MCF 10A (cell line): ENCODE measurements at regions of chr19 and their contacts with region 1.

Region 1: DNA sequence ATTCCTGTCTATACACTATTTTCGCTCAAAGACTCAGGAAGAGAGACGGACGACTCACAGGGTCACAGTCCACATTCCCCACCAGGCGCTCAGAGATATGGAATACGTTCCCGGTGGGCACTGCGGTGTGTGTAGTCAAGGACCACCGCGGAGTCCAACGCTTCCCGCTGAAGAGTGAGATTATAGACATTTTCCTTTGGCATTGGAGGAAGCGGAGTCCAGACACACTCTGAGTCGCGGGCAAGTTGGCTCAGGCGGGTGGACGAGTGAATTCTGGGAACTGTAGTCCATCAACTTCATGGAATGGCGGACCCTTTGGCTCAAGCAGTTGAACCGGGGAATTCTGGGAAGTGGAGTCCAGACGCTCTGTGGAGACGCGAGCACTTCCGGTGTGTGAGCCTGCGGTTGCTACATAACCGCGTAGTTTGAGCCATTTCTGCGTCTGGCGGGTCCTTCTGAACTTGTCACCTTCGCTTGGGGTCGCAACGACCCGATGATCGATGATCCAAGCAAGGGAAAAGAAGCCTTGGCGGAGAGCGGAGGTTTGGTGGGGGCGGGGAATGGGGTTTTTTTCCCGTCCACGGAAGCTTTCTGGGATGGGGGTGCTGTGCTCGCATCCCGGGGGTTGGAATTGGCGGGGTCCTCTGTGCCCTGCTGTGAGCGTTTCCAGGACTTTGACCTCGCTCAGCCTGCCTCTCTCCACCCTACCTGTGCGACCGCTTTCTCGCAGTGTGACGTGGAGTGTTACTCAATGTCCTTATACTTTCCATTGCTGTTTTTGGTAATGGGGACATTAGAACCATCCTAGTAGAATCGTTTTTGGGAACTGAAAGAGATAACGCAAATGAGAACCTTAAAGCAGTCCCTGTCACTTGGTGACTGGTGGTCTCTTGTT is at the start of gene ZNF230:
- DNase-seq: peak; percentile 99
- H3K4me3 Mint-ChIP-seq: peak within 1 kb of the TSS; percentile 84
- H3K27ac Mint-ChIP-seq: peak within 1 kb of the TSS; percentile 90
- H3K4me1 Mint-ChIP-seq: peaks cover 14% of the 10 kb centered on the region
- H3K27me3 Mint-ChIP-seq: no peaks in the 10 kb centered on the region
- CTCF ChIP-seq: no peak
- total RNA-seq, gene ZNF230: 2.9 and 4.0 TPM in 2 replicates

Region 2: GRCh38 chr19:43950834-43951645 is 51.8 kb before region 1 on chr19 and contains the start of gene ZNF221:
- CTCF ChIA-PET with region 1: no interaction called
- POLR2A ChIA-PET with region 1: interaction called, 5 read pairs
- intact Hi-C with region 1: loop called (anchors 1 kb)
- DNase-seq: peak; percentile 97
- H3K4me3 Mint-ChIP-seq: peak within 1 kb of the TSS; percentile 96
- H3K27ac Mint-ChIP-seq: peak within 1 kb of the TSS; percentile 91
- H3K4me1 Mint-ChIP-seq: no peaks in the 10 kb centered on the region
- H3K27me3 Mint-ChIP-seq: peaks cover 11% of the 10 kb centered on the region
- CTCF ChIP-seq: no peak
- total RNA-seq, gene ZNF221: 1.2 and 1.8 TPM in 2 replicates

Region 3: GRCh38 chr19:43983912-43984686 is 18.7 kb before region 1 on chr19 and contains the start of gene ZNF155:
- CTCF ChIA-PET with region 1: interaction called, 3 read pairs
- POLR2A ChIA-PET with region 1: interaction called, 20 read pairs
- intact Hi-C with region 1: no loop called
- DNase-seq: peak; percentile 96
- H3K4me3 Mint-ChIP-seq: peak within 1 kb of the TSS; percentile 96
- H3K27ac Mint-ChIP-seq: peak within 1 kb of the TSS; percentile 82
- H3K4me1 Mint-ChIP-seq: no peaks in the 10 kb centered on the region
- H3K27me3 Mint-ChIP-seq: no peaks in the 10 kb centered on the region
- CTCF ChIP-seq: no peak
- total RNA-seq, gene ZNF155: 4.2 and 6.7 TPM in 2 replicates

Region 4: DNA sequence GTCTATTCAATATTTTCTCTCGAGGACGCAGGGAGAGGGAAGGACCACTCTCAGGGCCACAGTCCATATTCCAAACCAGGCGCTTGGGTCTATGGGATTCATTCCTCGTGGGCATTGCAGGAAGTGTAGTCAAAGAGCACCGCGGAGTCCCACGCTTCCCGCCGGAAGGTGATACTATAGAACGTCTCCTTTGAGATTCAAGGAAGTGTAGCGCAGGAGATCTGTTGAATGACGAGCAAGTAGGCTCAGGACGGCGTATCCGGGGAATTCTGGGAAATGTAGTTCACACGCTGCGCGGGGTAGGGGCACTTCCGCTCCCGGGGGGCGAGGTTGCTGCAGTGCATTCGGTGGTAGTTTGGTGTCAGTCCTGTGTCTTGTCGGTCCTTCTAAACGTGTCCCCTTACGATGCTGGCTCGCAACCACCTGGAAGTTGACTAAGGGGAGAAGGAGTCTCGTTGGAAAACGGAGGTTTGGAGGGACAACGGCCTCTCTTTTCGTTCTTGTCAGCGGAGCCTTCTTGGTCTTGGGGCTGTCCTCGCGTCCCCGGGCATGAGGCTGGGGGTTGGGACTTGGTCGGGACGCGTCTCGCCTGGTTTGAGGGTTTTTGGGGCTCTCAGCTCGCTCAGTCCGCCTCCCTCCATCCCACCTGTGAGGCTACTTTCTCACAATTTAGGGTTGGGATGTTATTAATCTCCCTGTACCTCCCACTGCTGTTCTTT is 69.2 kb after region 1 on chr19 and contains the start of gene ZNF284:
- CTCF ChIA-PET with region 1: no interaction called
- POLR2A ChIA-PET with region 1: interaction called, 5 read pairs
- intact Hi-C with region 1: loop called (anchors 2 kb)
- DNase-seq: peak; percentile 92
- H3K4me3 Mint-ChIP-seq: peak within 1 kb of the TSS; percentile 83
- H3K27ac Mint-ChIP-seq: peak within 1 kb of the TSS; percentile 84
- H3K4me1 Mint-ChIP-seq: peaks cover 17% of the 10 kb centered on the region
- H3K27me3 Mint-ChIP-seq: no peaks in the 10 kb centered on the region
- CTCF ChIP-seq: no peak
- total RNA-seq, gene ZNF284: 2.5 and 3.8 TPM in 2 replicates

Region 5: DNA sequence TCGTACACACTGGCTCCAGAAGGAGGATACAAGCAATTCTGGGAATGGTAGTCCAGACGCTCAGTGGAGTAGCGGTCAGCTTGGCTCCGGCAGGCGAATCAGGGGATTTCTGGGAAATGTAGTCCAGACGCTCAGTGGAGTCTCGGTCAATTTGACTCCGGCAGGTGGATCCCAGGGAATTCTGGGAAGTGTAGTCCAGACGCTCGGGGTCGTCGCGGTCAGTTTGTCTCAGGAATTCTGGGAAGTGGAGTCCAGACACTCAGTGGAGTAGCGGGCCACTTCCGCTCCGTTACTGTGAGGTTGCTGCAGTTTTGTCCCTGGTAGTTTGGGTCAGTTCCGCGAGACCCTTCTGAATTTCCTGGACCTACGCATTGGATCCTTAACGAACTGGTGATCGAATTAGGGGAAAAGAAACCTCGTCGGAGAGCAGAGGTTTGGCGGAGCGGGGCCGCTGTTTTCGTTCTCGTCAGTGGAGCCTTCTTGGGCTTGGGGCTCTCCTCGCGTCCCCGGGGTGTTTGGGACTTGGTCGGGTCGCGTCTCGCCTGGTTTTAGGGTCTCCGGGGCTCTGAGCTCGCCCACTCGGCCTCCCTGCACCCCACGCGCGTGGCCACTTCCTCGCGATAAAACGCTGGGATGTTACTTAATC is 110.4 kb after region 1 on chr19 and contains the start of gene ZNF225:
- CTCF ChIA-PET with region 1: no interaction called
- POLR2A ChIA-PET with region 1: interaction called, 6 read pairs
- intact Hi-C with region 1: loop called (anchors 1 kb)
- DNase-seq: peak; percentile 99
- H3K4me3 Mint-ChIP-seq: peak within 1 kb of the TSS; percentile 86
- H3K27ac Mint-ChIP-seq: peak within 1 kb of the TSS; percentile 57
- H3K4me1 Mint-ChIP-seq: peaks cover 6% of the 10 kb centered on the region
- H3K27me3 Mint-ChIP-seq: no peaks in the 10 kb centered on the region
- CTCF ChIP-seq: no peak
- total RNA-seq, gene ZNF225: 3.6 and 5.7 TPM in 2 replicates

Region 6: DNA sequence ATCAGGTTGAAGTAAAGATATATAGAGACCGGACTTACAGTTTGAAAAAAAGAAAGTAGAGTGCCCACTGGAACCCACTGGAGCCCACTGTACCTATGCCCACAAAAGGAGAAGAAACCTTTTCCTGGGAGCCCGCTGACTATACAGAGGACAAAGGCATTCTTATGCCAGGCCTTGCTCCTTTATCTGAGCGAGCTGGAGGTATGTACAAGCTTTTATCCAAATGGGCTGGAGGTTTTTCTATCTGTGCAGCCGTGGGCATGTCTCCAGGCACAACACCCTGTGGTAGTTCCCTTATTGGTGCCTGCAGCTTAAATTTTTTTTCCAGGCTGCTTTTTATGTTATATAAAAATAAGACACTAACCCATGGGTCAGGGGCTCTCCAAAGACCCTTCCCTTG is 147.0 kb after region 1 on chr19:
- CTCF ChIA-PET with region 1: no interaction called
- POLR2A ChIA-PET with region 1: no interaction called
- intact Hi-C with region 1: no loop called
- DNase-seq: no peak
- H3K4me3 Mint-ChIP-seq: no peak overlapping the region
- H3K27ac Mint-ChIP-seq: no peak overlapping the region
- H3K4me1 Mint-ChIP-seq: no peaks in the 10 kb centered on the region
- H3K27me3 Mint-ChIP-seq: no peaks in the 10 kb centered on the region
- CTCF ChIP-seq: no peak

Region 7: DNA sequence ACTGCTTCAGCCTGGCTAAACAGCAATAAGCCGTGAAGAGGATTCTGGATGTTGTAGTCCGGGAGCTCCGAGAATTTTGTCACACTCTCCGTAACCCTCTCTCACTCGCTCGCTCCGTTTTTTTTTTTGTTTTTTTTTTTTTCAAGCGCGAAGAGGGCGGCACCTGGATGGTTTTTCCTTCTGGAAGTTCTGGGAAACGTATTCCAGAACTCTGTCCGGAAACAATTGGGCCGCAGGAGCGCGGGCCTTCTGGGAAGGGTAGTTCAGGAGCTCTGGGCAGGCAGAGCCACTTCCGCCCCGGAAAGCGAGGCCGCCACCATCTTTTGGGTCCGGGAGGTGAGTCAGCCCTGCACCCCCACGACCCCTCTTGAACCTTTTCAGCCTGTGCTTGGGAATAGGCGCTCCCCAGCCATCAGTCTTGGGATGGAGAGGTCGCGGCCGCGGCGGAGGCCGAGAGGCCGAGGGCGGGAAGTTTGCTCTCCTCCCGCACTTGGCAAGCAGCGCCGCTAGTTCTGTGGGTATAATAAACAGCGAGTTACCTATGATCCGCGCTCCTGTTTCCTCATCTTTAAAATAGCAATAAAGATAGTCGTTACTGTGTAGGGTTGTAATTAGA is 209.5 kb after region 1 on chr19 and contains the start of gene ZNF227:
- CTCF ChIA-PET with region 1: no interaction called
- POLR2A ChIA-PET with region 1: interaction called, 6 read pairs
- intact Hi-C with region 1: loop called (anchors 2 kb)
- DNase-seq: peak; percentile 96
- H3K4me3 Mint-ChIP-seq: peak within 1 kb of the TSS; percentile 94
- H3K27ac Mint-ChIP-seq: peak within 1 kb of the TSS; percentile 92
- H3K4me1 Mint-ChIP-seq: peaks cover 9% of the 10 kb centered on the region
- H3K27me3 Mint-ChIP-seq: no peaks in the 10 kb centered on the region
- CTCF ChIP-seq: no peak
- total RNA-seq, gene ZNF227: 22.6 and 29.0 TPM in 2 replicates

Region 8: DNA sequence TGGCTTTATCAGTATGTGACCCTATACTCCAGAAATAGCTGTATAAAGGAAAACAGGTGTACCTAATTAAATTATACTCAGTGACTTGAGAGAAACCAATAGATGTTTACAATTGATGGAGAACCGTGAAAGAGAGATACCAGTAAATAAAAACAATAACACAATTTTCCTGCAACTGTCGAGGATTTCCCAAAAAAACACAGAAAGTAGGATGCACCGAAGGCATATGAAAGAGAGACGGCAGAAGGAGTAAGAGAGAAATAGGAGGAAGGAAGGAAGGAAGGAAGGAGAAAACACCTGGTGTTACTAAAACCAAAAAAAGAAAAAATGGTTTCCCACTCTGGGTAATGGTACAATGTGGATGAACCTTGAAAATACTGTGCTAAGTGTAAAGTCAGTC is 452.3 kb after region 1 on chr19:
- CTCF ChIA-PET with region 1: no interaction called
- POLR2A ChIA-PET with region 1: no interaction called
- intact Hi-C with region 1: no loop called
- DNase-seq: no peak
- H3K4me3 Mint-ChIP-seq: no peak overlapping the region
- H3K27ac Mint-ChIP-seq: no peak overlapping the region
- H3K4me1 Mint-ChIP-seq: no peaks in the 10 kb centered on the region
- H3K27me3 Mint-ChIP-seq: no peaks in the 10 kb centered on the region
- CTCF ChIP-seq: no peak